Left lung (tissue), 14 donors: ENCODE measurements at regions of chr5 and their contacts with region 1.

Region 1: DNA sequence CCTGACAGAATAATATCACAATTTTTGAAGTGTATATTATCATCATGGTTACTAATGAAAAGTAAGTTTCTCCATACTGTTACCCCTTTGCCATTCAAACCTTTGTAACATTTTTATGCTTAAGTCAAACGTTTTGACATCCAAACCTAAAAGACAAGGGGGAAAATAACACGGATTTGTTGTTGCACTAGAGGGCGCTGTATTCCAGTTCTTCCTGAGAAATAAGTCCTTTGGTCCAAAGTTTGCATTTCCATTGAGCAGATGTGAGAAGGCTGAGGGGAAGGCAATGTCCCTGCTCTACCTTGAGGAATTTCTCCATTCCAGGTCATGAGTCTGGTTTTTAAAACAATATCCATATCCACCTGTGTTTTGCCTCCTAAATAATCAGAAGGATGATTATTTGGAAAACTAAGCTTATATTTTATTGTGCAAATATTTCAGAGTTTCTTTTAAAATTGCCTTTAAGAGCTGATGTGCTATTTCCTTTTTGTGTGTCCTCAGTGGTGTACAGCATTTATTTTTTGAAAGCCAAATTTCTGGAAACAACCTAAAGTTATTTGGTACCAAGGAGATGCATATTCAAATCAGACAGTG is 9.7 kb downstream of the LECT2 start:
- DNase-seq: peak in 2 of 4 donors; percentile 59 to 83
- ATAC-seq: peak; percentile 77
- H3K4me3 ChIP-seq: no peak overlapping the region
- H3K27ac ChIP-seq: no peak overlapping the region
- H3K4me1 ChIP-seq: no peaks in the 10 kb centered on the region
- H3K27me3 ChIP-seq: peaks cover 0 to 9% of the 10 kb centered on the region in 2 donors
- CTCF ChIP-seq: peak; percentile 58 to 70

Region 2: DNA sequence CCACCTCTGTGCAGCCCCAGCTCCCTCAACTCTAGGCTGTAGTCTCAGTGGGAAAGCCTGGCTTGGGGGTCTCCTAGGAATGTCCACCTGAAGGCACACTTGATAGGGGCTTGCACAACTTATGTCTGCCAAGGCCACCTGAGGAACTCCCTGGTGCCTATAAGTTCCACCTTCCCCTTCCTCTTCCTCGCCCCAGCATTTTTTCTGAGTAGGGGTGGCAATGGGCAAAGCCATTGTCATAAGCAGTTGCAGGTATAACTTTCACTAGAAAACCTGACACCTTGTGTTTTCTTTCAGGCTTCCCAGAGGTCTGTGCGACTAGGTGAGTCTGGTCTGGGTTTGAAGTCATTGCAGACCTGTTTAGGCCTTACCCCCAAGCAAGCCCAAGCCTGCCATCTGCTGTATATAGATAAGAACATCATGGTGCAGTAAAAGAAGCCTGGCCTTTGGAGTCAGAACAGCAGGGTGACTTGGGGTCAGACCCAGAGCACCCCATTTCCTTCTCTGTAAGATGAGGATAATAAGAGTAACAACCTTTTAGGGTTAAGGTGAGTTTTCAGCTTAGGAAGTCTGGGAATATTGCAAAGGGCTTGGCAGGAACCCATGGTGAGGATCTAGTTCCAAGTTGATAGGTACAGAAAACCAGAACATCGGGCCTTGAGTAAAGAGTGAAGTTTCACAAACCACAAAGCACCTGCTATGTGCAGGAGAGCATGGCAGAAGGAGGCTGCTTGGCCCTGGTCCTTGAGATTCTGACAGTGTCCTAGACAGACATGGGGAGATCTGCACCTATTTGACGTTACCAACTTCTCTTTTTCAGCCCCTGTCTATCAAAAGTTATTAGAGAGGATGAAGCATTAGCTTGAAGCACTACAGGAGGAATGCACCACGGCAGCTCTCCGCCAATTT is 117.6 kb after region 1 on chr5:
- intact Hi-C with region 1: loop called in 1 of 2 experiments (anchors 10 kb)
- DNase-seq: no peak
- ATAC-seq: peak; percentile 77
- H3K4me3 ChIP-seq: no peak overlapping the region
- H3K27ac ChIP-seq: no peak overlapping the region
- H3K4me1 ChIP-seq: peaks cover 0 to 14% of the 10 kb centered on the region in 2 donors
- H3K27me3 ChIP-seq: no peaks in the 10 kb centered on the region
- CTCF ChIP-seq: peak; percentile 34 to 51

Region 3: GRCh38 chr5:136174021-136174659 is 229.1 kb after region 1 on chr5:
- intact Hi-C with region 1: loop called in 1 of 2 experiments (anchors 10 kb)
- DNase-seq: peak in 2 of 4 donors; percentile 48 to 53
- ATAC-seq: peak; percentile 84
- H3K4me3 ChIP-seq: no peak overlapping the region
- H3K27ac ChIP-seq: no peak overlapping the region
- H3K4me1 ChIP-seq: no peaks in the 10 kb centered on the region
- H3K27me3 ChIP-seq: no peaks in the 10 kb centered on the region
- CTCF ChIP-seq: peak; percentile 37 to 43